WTC11 (cell line): ENCODE measurements at regions of chr5 and their contacts with region 1.

Region 1: GRCh38 chr5:130141659-130142320 is 237.5 kb downstream of the CHSY3 start:
- DNase-seq: peak; percentile 74
- ATAC-seq: peak; percentile 100
- H3K4me3 Mint-ChIP-seq: no peak overlapping the region
- H3K27ac Mint-ChIP-seq: no peak overlapping the region
- H3K4me1 Mint-ChIP-seq: peaks cover 12% of the 10 kb centered on the region
- H3K27me3 Mint-ChIP-seq: no peaks in the 10 kb centered on the region
- CTCF ChIP-seq: peak; percentile 56; the same call in 1 of the 2 replicates

Region 2: GRCh38 chr5:130109152-130109551 is 32.6 kb before region 1 on chr5:
- CTCF ChIA-PET with region 1: interaction called, 20 read pairs
- POLR2A ChIA-PET with region 1: no interaction called
- DNase-seq: no peak
- ATAC-seq: peak; percentile 75
- H3K4me3 Mint-ChIP-seq: no peak overlapping the region
- H3K27ac Mint-ChIP-seq: no peak overlapping the region
- H3K4me1 Mint-ChIP-seq: peaks cover 14% of the 10 kb centered on the region
- H3K27me3 Mint-ChIP-seq: no peaks in the 10 kb centered on the region
- CTCF ChIP-seq: no peak; the same call in 1 of the 2 replicates

Region 3: DNA sequence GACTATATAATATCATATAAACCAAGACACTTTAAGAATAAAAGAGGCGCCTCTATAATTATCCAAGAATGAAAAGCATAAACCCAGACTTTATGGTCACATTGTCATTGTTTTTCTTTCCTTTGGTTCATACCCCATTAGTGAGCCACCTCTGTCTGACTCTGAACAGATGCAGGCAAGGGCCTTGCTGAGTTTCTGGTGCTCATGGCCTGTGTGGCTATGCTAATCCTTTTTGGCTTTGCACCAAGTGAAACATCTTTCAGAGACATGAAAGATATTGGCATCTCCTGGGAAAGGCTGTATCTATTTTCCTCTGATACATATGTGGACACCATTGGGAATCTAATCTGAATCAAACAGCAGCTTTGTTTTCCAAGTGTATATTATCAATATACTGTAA is 15.0 kb before region 1 on chr5:
- CTCF ChIA-PET with region 1: no interaction called
- POLR2A ChIA-PET with region 1: no interaction called
- DNase-seq: no peak
- ATAC-seq: no peak
- H3K4me3 Mint-ChIP-seq: no peak overlapping the region
- H3K27ac Mint-ChIP-seq: no peak overlapping the region
- H3K4me1 Mint-ChIP-seq: no peaks in the 10 kb centered on the region
- H3K27me3 Mint-ChIP-seq: peaks cover 5% of the 10 kb centered on the region; the same call in 1 of the 2 replicates
- CTCF ChIP-seq: no peak